ENCODE measurements at regions of chr6 and their contacts with region 1.

Region 1: GRCh38 chr6:7107578-7108195 is at the start of gene RREB1:
- DNase-seq: peak; percentile 77 to 85
- ATAC-seq: peak; percentile 84
- H3K4me3 ChIP-seq: peak within 1 kb of the TSS; percentile 84 to 90
- H3K27ac ChIP-seq: peak within 1 kb of the TSS; percentile 32 to 60
- H3K4me1 ChIP-seq: no peaks in the 10 kb centered on the region
- H3K27me3 ChIP-seq: no peaks in the 10 kb centered on the region
- total RNA-seq, gene RREB1: 30.7 to 44.7 TPM

Region 2: GRCh38 chr6:7140631-7141378 is 33.1 kb after region 1 on chr6:
- intact Hi-C with region 1: loop called in 1 of 2 experiments (anchors 2 kb)
- DNase-seq: peak; percentile 94 to 97
- ATAC-seq: peak; percentile 97
- H3K4me3 ChIP-seq: peak overlapping the region; percentile 35 to 40
- H3K27ac ChIP-seq: peak overlapping the region; percentile 79 to 84
- H3K4me1 ChIP-seq: no peaks in the 10 kb centered on the region
- H3K27me3 ChIP-seq: no peaks in the 10 kb centered on the region

Region 3: GRCh38 chr6:7166410-7167305 is 59.0 kb after region 1 on chr6:
- intact Hi-C with region 1: loop called (anchors 5 to 10 kb)
- DNase-seq: no peak
- ATAC-seq: no peak
- H3K4me3 ChIP-seq: no peak overlapping the region
- H3K27ac ChIP-seq: no peak overlapping the region
- H3K4me1 ChIP-seq: peaks cover 4 to 13% of the 10 kb centered on the region in 2 donors
- H3K27me3 ChIP-seq: no peaks in the 10 kb centered on the region

Region 4: GRCh38 chr6:7697820-7698623 is 590.3 kb after region 1 on chr6:
- intact Hi-C with region 1: loop called in 1 of 2 experiments (anchors 10 kb)
- DNase-seq: peak in 1 of 2 donors; percentile 55
- ATAC-seq: peak; percentile 71
- H3K4me3 ChIP-seq: no peak overlapping the region
- H3K27ac ChIP-seq: peak overlapping the region in 1 of 2 donors; percentile 30
- H3K4me1 ChIP-seq: peaks cover 0 to 4% of the 10 kb centered on the region in 2 donors
- H3K27me3 ChIP-seq: no peaks in the 10 kb centered on the region

Measured in aorta (tissue), 5 donors.